Ovary (tissue), 10 donors: ENCODE measurements at regions of chr2 and their contacts with region 1.

Region 1: DNA sequence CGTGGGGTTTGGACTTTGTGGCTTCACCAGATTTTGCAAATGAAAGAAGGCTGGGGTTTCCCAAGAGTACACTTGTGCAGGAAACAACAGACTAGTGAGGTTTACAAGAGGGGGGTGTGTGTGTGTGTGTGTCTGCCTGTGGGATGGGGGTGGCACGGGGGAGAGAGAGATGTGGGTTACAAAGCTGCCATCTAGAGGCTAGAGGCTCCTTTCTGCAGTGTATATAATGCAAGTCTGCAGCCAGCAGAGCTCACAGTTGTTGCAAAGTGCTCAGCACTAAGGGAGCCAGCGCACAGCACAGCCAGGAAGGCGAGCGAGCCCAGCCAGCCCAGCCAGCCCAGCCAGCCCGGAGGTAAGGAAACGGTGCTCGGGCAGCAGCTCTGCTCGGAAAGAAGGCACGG is at the start of gene ACKR3:
- DNase-seq: peak; percentile 56 to 71 (median 62)
- H3K4me3 ChIP-seq: peak within 1 kb of the TSS; percentile 42
- H3K27ac ChIP-seq: peak within 1 kb of the TSS; percentile 66 to 90
- H3K4me1 ChIP-seq: peaks cover 2% of the 10 kb centered on the region
- H3K27me3 ChIP-seq: no peaks in the 10 kb centered on the region
- CTCF ChIP-seq: peak in 1 of 3 donors; percentile 33
- EP300 ChIP-seq: no peak
- POLR2A ChIP-seq: no peak
- total RNA-seq, gene ACKR3: 4.6 to 22.7 (median 7.4) TPM

Region 2: GRCh38 chr2:236359426-236360045 is 210.0 kb before region 1 on chr2:
- intact Hi-C with region 1: loop called in 1 of 4 experiments (anchors 5 kb)
- DNase-seq: no peak
- H3K4me3 ChIP-seq: no peak overlapping the region
- H3K27ac ChIP-seq: no peak overlapping the region
- H3K4me1 ChIP-seq: peaks cover 5% of the 10 kb centered on the region
- H3K27me3 ChIP-seq: no peaks in the 10 kb centered on the region
- CTCF ChIP-seq: no peak
- EP300 ChIP-seq: no peak
- POLR2A ChIP-seq: no peak

Region 3: GRCh38 chr2:236642584-236643291 is 73.2 kb after region 1 on chr2:
- intact Hi-C with region 1: loop called in 1 of 4 experiments (anchors 5 kb)
- DNase-seq: peak; percentile 54 to 90 (median 70)
- H3K4me3 ChIP-seq: no peak overlapping the region
- H3K27ac ChIP-seq: peak overlapping the region in 1 of 2 donors; percentile 5
- H3K4me1 ChIP-seq: peaks cover 2% of the 10 kb centered on the region
- H3K27me3 ChIP-seq: no peaks in the 10 kb centered on the region
- CTCF ChIP-seq: no peak
- EP300 ChIP-seq: peak; percentile 92
- POLR2A ChIP-seq: no peak